ENCODE measurements at regions of chr5 and their contacts with region 1.

Region 1: GRCh38 chr5:97888439-97888838 is 705.4 kb upstream of the RIOK2 start:
- DNase-seq: peak; percentile 51
- ATAC-seq: peak; percentile 97
- H3K4me3 ChIP-seq: no peak overlapping the region
- H3K27ac ChIP-seq: no peak overlapping the region
- H3K4me1 ChIP-seq: no peaks in the 10 kb centered on the region
- H3K27me3 ChIP-seq: no peaks in the 10 kb centered on the region
- CTCF ChIP-seq: no peak
- EP300 ChIP-seq: peak; percentile 23 to 64; a peak in 1 of 4 replicates
- POLR2A ChIP-seq: no peak
- RAD21 ChIP-seq: no peak

Region 2: GRCh38 chr5:97838214-97838613 is 50.2 kb before region 1 on chr5:
- CTCF ChIA-PET with region 1: no interaction called
- POLR2A ChIA-PET with region 1: no interaction called
- RAD21 ChIA-PET with region 1: no interaction called
- SMC1A ChIA-PET with region 1: no interaction called
- in situ Hi-C with region 1: no loop called
- intact Hi-C with region 1: loop called (anchors 1 kb)
- DNase-seq: peak; percentile 58
- ATAC-seq: peak; percentile 96
- H3K4me3 ChIP-seq: no peak overlapping the region
- H3K27ac ChIP-seq: no peak overlapping the region
- H3K4me1 ChIP-seq: no peaks in the 10 kb centered on the region
- H3K27me3 ChIP-seq: no peaks in the 10 kb centered on the region
- CTCF ChIP-seq: no peak
- EP300 ChIP-seq: peak; percentile 84 to 93
- POLR2A ChIP-seq: no peak
- RAD21 ChIP-seq: no peak

Measured in GM12878 (cell line).